PC-3 (cell line): ENCODE measurements at regions of chr7 and their contacts with region 1.

Region 1: DNA sequence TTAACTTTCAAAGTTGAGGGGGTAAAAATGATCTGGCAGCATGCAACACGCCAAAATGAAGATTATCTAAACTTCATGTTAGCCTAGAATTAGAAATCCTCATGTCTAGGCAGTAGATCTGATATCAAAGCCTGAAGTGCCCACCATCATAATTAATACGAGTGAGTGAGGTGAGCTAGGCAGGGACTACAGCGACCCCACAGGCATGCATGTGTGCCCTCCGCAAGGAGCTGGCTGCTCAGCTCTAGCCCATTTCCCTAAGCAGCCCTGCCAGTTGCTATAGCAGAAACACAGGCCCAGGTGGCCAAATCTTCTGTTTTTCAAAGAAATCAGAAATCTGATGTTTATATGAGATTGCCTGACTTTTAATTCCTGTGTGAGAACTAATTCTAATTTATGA is 93.1 kb upstream of the IFRD1 start:
- DNase-seq: no peak
- ATAC-seq: no peak
- H3K4me3 ChIP-seq: no peak overlapping the region
- H3K27ac ChIP-seq: no peak overlapping the region
- H3K4me1 ChIP-seq: no peaks in the 10 kb centered on the region
- H3K27me3 ChIP-seq: no peaks in the 10 kb centered on the region
- CTCF ChIP-seq: no peak

Region 2: GRCh38 chr7:110522761-110523244 is 1834.3 kb before region 1 on chr7:
- CTCF ChIA-PET with region 1: no interaction called
- POLR2A ChIA-PET with region 1: interaction called, 10 read pairs
- intact Hi-C with region 1: no loop called
- DNase-seq: peak; percentile 83
- ATAC-seq: peak; percentile 99
- H3K4me3 ChIP-seq: no peak overlapping the region
- H3K27ac ChIP-seq: peak overlapping the region; percentile 58
- H3K4me1 ChIP-seq: peaks cover 12% of the 10 kb centered on the region
- H3K27me3 ChIP-seq: no peaks in the 10 kb centered on the region
- CTCF ChIP-seq: no peak

Region 3: DNA sequence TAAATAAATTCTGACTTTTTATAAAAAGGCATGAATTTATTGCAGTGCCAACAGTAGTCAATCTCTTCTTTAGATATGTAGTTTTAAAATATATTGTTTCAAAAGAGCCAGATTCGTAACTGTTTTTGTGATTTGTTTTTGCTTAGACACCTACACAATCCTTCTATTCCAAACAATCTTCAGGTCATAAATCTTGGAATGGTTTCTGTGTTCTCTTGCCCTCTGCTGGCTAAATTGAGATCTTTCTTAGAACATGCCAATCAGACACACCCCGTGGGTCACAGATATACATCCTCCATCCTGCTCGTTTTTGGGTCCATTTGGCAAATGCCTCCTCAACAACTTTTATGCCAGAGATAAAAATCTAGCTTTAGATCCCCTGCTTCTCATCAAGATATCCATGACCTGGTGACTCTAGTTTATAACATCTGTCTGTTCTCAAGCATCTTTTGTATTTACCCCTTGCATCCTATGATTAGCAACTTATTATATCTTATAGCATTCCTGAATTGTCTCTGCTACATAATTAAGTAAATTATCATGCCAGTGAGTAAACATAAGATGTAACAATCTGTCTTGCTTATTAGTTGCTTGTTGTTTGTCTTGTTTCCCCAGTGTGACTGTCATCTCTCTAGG is 57.8 kb after region 1 on chr7:
- CTCF ChIA-PET with region 1: no interaction called
- POLR2A ChIA-PET with region 1: no interaction called
- intact Hi-C with region 1: no loop called
- DNase-seq: peak; percentile 70
- ATAC-seq: peak; percentile 83
- H3K4me3 ChIP-seq: no peak overlapping the region
- H3K27ac ChIP-seq: no peak overlapping the region
- H3K4me1 ChIP-seq: peaks cover 11% of the 10 kb centered on the region; the same call in 1 of the 2 replicates
- H3K27me3 ChIP-seq: no peaks in the 10 kb centered on the region
- CTCF ChIP-seq: peak; percentile 78